ENCODE measurements at regions of chr3 and their contacts with region 1.

Region 1: GRCh38 chr3:15098503-15099363 is at the start of gene RBSN:
- DNase-seq: peak; percentile 98
- ATAC-seq: peak; percentile 85
- H3K4me3 Mint-ChIP-seq: peak within 1 kb of the TSS; percentile 85
- H3K27ac Mint-ChIP-seq: peak within 1 kb of the TSS; percentile 91
- H3K4me1 Mint-ChIP-seq: peaks cover 18% of the 10 kb centered on the region
- H3K27me3 Mint-ChIP-seq: peaks cover 2% of the 10 kb centered on the region
- total RNA-seq, gene RBSN: 13.5 to 15.0 TPM

Region 2: DNA sequence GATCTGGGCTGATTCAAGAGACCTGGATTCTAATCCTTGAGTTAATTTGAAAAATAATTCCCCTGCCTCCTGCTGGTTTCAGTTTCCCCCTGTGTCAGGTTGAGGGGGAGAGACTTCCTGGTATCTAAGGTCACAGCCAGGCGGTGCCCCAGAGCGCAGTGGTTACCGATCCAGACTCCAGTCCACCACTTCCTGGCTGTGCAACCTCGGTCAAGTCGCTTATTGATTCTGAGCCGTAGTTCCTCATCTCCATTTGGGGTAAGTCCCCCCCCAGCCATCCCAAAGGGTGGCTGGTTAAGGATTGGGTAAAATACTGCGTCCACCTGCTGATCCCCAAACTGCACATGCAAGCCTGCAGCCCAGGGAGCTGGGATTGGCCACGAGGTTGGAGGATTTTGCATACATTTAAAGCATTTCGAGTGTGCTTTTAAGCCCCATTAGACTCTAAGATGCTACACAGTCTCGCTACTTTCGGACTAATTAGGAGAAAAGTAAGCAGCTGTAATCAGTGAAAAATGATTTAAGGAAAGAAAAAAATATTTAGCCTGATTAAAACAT is 672.6 kb before region 1 on chr3:
- CTCF ChIA-PET with region 1: no interaction called
- POLR2A ChIA-PET with region 1: no interaction called
- intact Hi-C with region 1: loop called in 1 of 2 experiments (anchors 10 kb)
- DNase-seq: peak; percentile 66
- ATAC-seq: peak; percentile 45
- H3K4me3 Mint-ChIP-seq: peak overlapping the region; percentile 0
- H3K27ac Mint-ChIP-seq: peak overlapping the region; percentile 79
- H3K4me1 Mint-ChIP-seq: peaks cover 91% of the 10 kb centered on the region
- H3K27me3 Mint-ChIP-seq: no peaks in the 10 kb centered on the region

Region 3: DNA sequence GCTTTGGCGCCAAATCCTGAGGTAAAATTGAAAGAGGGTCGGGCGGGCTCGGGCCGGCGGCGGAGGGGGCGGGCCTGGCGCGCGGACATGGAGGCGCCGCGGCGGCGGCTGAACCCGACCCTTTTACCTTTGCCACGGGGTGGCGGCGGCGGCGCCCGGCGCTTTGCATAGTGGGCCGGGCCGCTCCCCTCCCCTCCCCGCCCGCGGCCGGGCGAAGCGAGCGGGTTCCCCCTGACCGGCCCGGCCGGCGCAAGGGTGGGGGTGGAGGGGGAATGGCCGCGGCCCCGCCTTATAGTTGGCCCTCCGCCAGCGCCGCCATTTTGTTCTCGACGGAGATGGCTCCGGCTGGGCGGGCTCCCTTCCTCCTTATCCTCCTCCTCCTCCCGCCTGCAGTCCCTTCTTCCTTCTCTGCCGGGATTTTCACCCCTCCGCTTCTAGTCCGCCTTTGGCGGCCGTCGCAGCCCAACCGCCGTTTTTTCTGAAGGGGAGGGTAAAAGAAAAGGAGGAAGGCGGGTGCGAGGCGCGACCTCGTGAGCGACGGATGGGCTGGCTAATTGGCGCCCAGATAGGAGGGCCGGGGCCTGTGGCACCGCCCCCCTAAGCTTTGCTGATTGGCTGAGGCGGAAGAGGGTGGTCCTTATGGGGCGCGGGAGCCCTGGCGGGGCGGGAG is 150.7 kb before region 1 on chr3:
- CTCF ChIA-PET with region 1: no interaction called
- POLR2A ChIA-PET with region 1: no interaction called
- intact Hi-C with region 1: loop called (anchors 1 kb)
- DNase-seq: peak; percentile 97
- ATAC-seq: peak; percentile 97
- H3K4me3 Mint-ChIP-seq: peak overlapping the region; percentile 91
- H3K27ac Mint-ChIP-seq: peak overlapping the region; percentile 98
- H3K4me1 Mint-ChIP-seq: peaks cover 49% of the 10 kb centered on the region
- H3K27me3 Mint-ChIP-seq: no peaks in the 10 kb centered on the region

Region 4: GRCh38 chr3:15064835-15065549 is 33.7 kb before region 1 on chr3 and contains the start of gene MRPS25:
- CTCF ChIA-PET with region 1: interaction called, 4 read pairs
- POLR2A ChIA-PET with region 1: interaction called, 8 read pairs
- intact Hi-C with region 1: loop called (anchors 1 kb)
- DNase-seq: peak; percentile 95
- ATAC-seq: peak; percentile 98
- H3K4me3 Mint-ChIP-seq: peak within 1 kb of the TSS; percentile 96
- H3K27ac Mint-ChIP-seq: peak within 1 kb of the TSS; percentile 96
- H3K4me1 Mint-ChIP-seq: peaks cover 22% of the 10 kb centered on the region
- H3K27me3 Mint-ChIP-seq: no peaks in the 10 kb centered on the region
- total RNA-seq, gene MRPS25: 52.3 to 67.0 TPM

Region 5: DNA sequence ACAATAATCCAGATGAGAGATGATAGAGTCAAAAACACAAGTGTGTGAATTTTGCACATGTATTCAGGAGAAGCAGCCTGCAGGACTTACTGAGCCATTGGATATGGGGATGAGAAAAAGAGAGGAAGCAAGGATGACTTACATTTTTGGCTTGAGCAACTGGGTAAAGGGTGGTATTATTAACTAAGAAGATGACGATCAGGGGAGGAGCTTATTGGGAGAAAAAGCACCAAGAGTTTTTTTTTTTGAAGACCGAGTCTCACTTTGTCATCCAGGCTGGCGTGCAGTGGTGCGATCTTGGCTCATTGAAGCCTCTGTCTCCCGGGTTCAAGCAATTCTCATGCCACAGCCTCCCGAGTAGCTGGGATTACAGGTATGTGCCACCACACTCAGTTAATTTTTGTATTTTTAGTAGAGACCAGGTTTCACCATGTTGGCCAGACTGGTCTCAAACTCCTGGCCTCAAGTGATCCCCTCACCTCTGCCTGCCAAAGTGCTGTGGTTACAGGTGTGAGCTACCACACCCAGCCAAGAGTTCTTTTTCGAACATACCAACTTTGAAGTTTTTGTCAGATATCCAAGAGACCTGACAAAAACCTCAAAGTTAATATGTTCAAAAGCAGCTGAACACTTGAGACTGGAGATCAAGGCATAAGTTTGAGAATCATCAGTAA is 248.5 kb after region 1 on chr3:
- CTCF ChIA-PET with region 1: no interaction called
- POLR2A ChIA-PET with region 1: no interaction called
- intact Hi-C with region 1: no loop called
- DNase-seq: no peak
- ATAC-seq: no peak
- H3K4me3 Mint-ChIP-seq: no peak overlapping the region
- H3K27ac Mint-ChIP-seq: peak overlapping the region; percentile 49
- H3K4me1 Mint-ChIP-seq: peaks cover 34% of the 10 kb centered on the region
- H3K27me3 Mint-ChIP-seq: no peaks in the 10 kb centered on the region

Region 6: GRCh38 chr3:15377961-15378791 is 279.4 kb after region 1 on chr3:
- CTCF ChIA-PET with region 1: no interaction called
- POLR2A ChIA-PET with region 1: no interaction called
- intact Hi-C with region 1: loop called in 1 of 2 experiments (anchors 1 kb)
- DNase-seq: peak; percentile 96
- ATAC-seq: peak; percentile 96
- H3K4me3 Mint-ChIP-seq: no peak overlapping the region
- H3K27ac Mint-ChIP-seq: peak overlapping the region; percentile 73
- H3K4me1 Mint-ChIP-seq: peaks cover 6% of the 10 kb centered on the region
- H3K27me3 Mint-ChIP-seq: no peaks in the 10 kb centered on the region

Region 7: DNA sequence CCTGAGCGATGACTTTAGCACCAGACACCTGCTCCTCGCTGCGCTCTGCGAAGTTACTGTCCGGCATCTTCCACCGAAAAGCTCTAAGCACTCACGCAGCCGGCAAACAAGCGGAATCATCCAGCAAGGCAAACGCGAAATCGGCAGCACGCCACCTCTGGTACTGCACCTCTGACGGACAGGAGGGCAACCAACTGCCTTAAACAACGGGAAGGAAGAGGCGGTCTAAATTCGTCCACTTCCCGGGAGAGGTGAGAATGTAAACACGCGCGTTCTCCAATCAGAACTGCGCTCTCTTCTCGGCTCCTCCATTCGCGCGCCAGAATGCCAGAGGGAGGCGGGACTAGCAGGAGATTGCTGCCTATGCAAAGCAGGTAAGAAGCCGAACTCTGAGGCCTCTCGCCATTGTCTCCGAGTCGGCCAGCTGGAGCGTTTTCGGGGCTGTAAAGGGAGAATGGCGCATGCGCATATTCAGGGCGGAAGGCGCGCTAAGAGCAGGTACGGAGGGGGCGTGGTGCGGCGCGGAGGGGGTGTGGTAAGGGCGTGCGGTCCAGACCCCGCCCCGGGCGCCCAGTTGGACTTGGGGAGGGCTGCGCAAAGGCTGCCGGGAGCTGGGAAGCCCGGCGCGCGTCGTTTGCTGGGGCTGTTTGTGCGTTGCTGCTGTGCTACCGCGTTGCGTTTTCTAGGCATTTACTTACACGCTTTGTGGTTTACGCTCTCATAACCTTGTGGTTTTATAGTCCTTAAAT is 502.8 kb after region 1 on chr3 and contains the starts of genes BTD and HACL1:
- CTCF ChIA-PET with region 1: no interaction called
- POLR2A ChIA-PET with region 1: no interaction called
- intact Hi-C with region 1: loop called in 1 of 2 experiments (anchors 1 kb)
- DNase-seq: peak; percentile 99
- ATAC-seq: peak; percentile 94
- H3K4me3 Mint-ChIP-seq: peak within 1 kb of the TSS; percentile 100
- H3K27ac Mint-ChIP-seq: peak within 1 kb of the TSS; percentile 98
- H3K4me1 Mint-ChIP-seq: peaks cover 41% of the 10 kb centered on the region
- H3K27me3 Mint-ChIP-seq: no peaks in the 10 kb centered on the region
- total RNA-seq, gene BTD: 3.8 to 4.4 TPM
- total RNA-seq, gene HACL1: 22.3 to 23.2 TPM

Measured in activated CD4-positive, alpha-beta T cell treated with anti-CD3 and anti-CD28 coated beads for 36 hours (primary cell).